Spleen (tissue), 13 donors: ENCODE measurements at regions of chr16 and their contacts with region 1.

Region 1: DNA sequence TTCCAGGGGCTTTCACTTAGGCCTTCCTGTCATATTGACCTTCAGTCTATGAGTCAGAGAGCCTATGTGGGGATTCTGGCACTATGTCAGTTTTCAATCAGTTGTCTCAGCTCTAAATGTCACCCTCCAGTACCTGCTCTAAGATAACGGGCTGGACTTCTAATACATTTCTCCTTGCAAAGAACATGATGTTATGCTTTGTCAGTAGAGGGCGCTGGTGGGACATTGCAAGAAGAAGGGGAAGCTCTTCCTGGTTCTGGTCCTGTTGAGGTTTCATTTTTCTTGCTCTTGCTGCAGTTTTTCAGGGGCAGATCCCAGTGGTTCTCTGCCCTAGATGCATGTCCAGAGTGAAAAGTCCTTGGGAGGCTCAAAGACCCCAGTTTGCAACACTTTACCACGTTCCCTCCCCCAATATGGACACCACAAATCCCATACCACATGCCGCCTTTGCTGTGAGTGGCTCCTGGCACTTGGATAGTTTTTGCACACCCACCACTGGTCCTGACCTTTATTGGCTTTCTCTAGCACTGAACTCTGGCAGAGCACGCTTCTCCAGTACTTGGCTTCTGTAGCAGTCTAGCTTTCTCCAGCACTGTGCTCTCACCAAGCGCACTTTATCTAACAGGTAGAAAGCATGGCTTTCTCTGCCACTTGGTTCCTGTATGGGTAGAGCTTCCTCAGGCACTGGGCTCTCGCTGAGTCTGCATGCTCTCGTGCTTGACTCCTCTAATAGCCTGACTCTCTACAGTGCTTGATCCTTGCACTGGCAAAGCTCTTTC is 49.0 kb downstream of the BCL7C start:
- DNase-seq: no peak
- H3K4me3 ChIP-seq: peak overlapping the region in 4 of 8 donors; percentile 16 to 49 (median 20)
- H3K27ac ChIP-seq: peak overlapping the region in 7 of 8 donors; percentile 2 to 72 (median 47)
- H3K4me1 ChIP-seq: peaks cover 6 to 17% (median 11%) of the 10 kb centered on the region in 6 donors
- H3K27me3 ChIP-seq: no peaks in the 10 kb centered on the region
- CTCF ChIP-seq: peak; percentile 68 to 93 (median 83)
- POLR2A ChIP-seq: no peak

Region 2: DNA sequence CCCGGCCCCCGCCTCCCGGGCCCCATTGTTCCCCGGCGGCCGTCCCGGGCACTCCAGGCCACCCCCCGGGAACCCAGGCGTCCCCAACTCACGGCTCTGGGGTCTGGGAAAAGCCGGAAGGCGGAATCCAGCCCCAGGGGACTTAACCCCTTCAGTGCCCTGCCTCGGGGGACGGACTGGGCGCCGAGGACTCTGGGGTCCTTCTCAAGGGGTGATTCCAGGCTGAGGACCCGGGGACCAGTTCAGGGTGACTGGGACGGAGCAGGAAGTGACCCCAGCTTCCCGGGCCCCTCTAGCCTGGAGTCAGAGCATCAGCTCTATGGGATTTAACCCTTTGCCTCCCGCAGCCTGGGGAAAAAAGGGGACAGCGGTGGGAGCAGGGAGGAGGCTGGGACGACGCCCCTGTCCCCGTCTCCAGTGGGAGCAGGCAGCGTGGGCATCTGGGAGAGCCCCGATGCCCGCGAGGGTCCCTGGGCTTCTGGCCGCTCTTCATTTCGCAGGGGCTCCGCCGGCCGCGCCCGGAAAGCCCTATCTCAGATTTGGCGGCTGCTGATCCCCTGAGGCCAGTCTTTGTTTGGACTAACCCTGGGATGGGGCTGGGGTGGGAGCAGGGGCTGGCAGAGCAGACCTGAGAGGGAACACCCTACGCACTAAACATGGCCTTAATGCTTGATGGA is 57.8 kb before region 1 on chr16 and contains the start of gene ZNF629:
- intact Hi-C with region 1: loop called (anchors 10 kb)
- DNase-seq: no peak
- H3K4me3 ChIP-seq: peak within 1 kb of the TSS; percentile 65 to 93 (median 78)
- H3K27ac ChIP-seq: peak within 1 kb of the TSS; percentile 66 to 89 (median 84)
- H3K4me1 ChIP-seq: peaks cover 0 to 42% (median 26%) of the 10 kb centered on the region in 6 donors
- H3K27me3 ChIP-seq: peaks cover 0 to 26% (median 0%) of the 10 kb centered on the region in 7 donors
- CTCF ChIP-seq: no peak
- POLR2A ChIP-seq: no peak
- total RNA-seq, gene ZNF629: 7.6 to 13.9 (median 12.5) TPM

Region 3: GRCh38 chr16:30921748-30922419 is 77.0 kb after region 1 on chr16:
- intact Hi-C with region 1: loop called (anchors 2 kb)
- DNase-seq: peak; percentile 96
- H3K4me3 ChIP-seq: peak overlapping the region; percentile 47 to 95 (median 78)
- H3K27ac ChIP-seq: peak overlapping the region; percentile 49 to 99 (median 96)
- H3K4me1 ChIP-seq: peaks cover 7 to 45% (median 22%) of the 10 kb centered on the region in 6 donors
- H3K27me3 ChIP-seq: no peaks in the 10 kb centered on the region
- CTCF ChIP-seq: peak; percentile 79 to 96 (median 92)
- POLR2A ChIP-seq: no peak